ENCODE measurements at regions of chr12 and their contacts with region 1.

Region 1: DNA sequence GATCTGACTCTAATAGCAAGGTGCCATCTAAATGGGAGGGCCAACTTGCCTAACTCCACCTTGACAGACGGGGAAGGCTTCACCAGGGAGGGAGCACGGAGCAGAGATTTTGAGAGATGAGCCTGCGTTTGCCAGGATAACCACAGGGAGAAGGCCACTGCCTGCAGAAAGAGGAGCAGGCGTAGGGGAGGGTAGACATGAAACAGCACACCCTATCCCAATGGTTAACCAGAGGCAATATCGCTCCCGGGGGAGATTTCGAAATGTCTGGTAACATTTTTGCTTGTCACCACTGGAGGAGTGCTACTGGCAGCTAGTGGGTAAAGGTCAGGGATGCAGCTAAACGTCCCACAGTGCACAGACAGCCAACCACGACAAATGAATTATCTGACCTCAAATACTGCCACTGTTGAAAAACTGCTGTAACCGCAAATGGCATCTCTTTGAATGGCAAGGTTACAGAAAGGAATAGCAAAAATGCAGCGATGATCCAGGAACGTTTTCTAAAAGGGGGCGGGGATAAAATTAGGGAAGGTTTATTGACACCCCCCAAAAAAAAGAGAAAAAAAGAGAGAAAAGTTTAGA is 126.0 kb upstream of the ATF7IP start:
- DNase-seq: peak; percentile 63
- ATAC-seq: peak; percentile 86
- H3K4me3 Mint-ChIP-seq: peak overlapping the region; percentile 62
- H3K27ac Mint-ChIP-seq: peak overlapping the region; percentile 89
- H3K4me1 Mint-ChIP-seq: peaks cover 20% of the 10 kb centered on the region
- H3K27me3 Mint-ChIP-seq: no peaks in the 10 kb centered on the region

Region 2: DNA sequence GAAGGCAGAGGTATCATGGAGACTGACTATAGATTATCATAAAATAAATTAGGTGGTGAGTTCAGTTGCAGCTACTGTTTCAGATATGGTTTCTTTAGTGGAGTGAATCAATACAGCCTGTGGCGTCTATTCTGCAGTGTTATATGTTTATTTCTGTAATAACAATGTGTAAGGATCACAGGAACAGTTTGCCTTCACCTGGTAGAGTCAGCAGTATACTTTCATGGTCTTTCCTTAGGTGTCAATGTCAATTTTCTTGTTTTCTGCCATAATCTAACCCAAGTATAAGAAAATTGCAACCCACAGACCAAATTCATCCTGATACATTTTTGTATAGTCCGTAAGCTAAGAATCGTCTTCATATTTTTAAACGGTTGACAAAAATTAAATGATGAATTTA is 14.4 kb before region 1 on chr12:
- CTCF ChIA-PET with region 1: interaction called, 38 read pairs
- POLR2A ChIA-PET with region 1: interaction called, 4 read pairs
- intact Hi-C with region 1: no loop called
- DNase-seq: no peak
- ATAC-seq: no peak
- H3K4me3 Mint-ChIP-seq: no peak overlapping the region
- H3K27ac Mint-ChIP-seq: no peak overlapping the region
- H3K4me1 Mint-ChIP-seq: peaks cover 13% of the 10 kb centered on the region
- H3K27me3 Mint-ChIP-seq: peaks cover 4% of the 10 kb centered on the region

Region 3: DNA sequence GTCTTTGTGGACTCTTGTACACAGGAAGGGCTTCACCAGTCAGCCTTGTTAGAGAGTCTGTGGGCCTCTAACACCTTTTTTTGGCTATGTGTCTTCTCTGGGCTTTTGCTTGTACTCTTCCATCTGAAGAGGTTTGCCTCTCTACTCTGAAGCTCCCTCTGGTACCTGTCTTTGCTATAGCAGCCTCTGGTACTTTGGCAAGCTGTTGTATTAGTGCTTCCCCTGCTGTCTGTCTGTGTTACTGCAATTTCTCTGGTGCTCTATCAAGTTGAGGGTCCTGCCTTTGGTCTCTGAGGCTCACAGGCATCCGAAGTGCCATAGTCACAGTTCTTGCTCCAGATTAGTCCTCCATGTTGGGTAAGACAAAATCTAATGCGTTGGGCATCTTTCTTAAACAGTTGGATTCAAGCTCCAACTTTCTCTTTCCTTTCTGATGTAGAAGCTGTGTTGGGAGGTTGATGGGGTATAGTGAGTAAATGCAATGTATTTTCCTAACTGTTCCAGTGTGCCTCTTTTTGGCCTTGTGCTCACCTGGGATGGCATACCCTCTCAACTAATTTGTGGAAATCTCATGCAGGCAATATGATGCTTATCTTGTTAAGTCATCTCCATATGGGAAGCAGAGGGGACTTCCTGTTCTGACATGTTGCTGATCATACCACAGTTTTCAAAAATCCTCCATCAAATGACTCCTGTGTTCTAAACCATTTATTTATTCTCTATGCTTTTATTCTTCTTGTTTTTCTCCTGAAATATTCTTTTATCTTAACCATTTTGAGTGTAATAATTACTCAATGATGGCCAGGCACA is 214.9 kb after region 1 on chr12:
- CTCF ChIA-PET with region 1: interaction called, 19 read pairs
- POLR2A ChIA-PET with region 1: no interaction called
- intact Hi-C with region 1: loop called (anchors 1 to 5 kb)
- DNase-seq: peak; percentile 42
- ATAC-seq: peak; percentile 92
- H3K4me3 Mint-ChIP-seq: no peak overlapping the region
- H3K27ac Mint-ChIP-seq: peak overlapping the region; percentile 78
- H3K4me1 Mint-ChIP-seq: peaks cover 46% of the 10 kb centered on the region
- H3K27me3 Mint-ChIP-seq: no peaks in the 10 kb centered on the region

Region 4: DNA sequence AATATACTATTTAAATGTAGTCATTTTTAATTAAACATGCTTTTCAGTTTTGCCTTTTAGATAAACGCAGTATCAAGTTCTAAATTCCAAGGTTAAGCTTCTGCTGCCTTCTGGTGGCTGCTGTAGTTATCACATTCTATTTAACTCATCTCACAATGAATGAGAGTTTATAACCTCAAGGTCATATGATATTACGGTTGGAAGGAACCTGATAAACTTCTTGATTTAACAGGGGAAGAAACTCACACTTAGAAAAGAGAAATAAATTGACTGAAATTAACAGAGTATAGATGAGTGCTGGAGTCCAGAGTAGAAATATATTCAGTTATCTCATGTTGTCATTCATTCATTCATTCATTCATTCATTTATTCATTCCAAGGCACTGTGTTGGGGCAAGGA is 425.1 kb after region 1 on chr12:
- CTCF ChIA-PET with region 1: interaction called, 6 read pairs
- POLR2A ChIA-PET with region 1: no interaction called
- intact Hi-C with region 1: loop called (anchors 1 kb)
- DNase-seq: peak; percentile 44
- ATAC-seq: no peak
- H3K4me3 Mint-ChIP-seq: no peak overlapping the region
- H3K27ac Mint-ChIP-seq: no peak overlapping the region
- H3K4me1 Mint-ChIP-seq: peaks cover 3% of the 10 kb centered on the region
- H3K27me3 Mint-ChIP-seq: peaks cover 5% of the 10 kb centered on the region